ENCODE measurements at regions of chr2 and their contacts with region 1.

Region 1: DNA sequence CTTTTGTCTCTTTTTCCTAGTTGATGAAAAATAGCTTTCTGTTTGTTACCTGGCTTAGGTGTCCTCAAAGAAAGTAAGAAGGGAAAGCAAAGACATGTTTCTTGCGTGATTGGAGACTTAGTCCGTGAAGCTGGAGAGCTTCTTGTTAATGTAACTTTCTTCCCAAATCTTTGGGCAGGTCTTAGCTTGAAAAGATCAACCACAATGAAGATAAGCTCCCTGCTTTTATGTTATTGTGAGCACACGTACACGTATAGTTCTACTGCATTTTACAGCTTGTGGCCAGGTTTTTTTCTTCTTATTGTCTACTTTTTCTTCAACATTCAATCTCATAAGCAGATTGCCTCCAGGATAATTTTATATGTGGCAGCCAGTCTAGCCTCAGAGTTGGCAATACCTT is 99.8 kb downstream of the DIS3L2 start:
- DNase-seq: no peak
- ATAC-seq: no peak
- H3K4me3 ChIP-seq: no peak overlapping the region
- H3K27ac ChIP-seq: no peak overlapping the region
- H3K4me1 ChIP-seq: no peaks in the 10 kb centered on the region
- H3K27me3 ChIP-seq: no peaks in the 10 kb centered on the region
- CTCF ChIP-seq: no peak

Region 2: DNA sequence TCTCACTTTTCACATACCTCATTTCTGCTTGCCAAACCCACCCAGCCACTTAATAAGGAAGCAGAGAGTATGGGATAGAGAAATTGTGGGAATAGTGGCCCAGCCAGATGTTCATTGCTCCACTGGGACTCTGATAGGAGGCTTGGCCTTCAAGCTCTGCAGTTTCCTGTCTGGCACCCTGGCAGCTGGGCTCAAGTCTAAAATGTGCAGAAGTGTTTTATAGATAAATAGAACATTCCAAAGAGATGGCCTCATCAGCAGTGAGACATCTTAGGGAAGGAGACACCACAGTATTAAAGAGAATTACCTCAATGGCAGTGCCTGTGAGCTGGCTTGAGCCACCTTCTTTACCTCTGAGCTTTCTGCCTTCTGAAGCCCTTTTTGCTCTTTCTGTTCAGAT is 250.4 kb before region 1 on chr2:
- CTCF ChIA-PET with region 1: no interaction called
- POLR2A ChIA-PET with region 1: no interaction called
- in situ Hi-C with region 1: no loop called
- intact Hi-C with region 1: no loop called
- DNase-seq: no peak
- ATAC-seq: peak; percentile 44; the same call in 1 of the 2 replicates
- H3K4me3 ChIP-seq: no peak overlapping the region
- H3K27ac ChIP-seq: no peak overlapping the region
- H3K4me1 ChIP-seq: no peaks in the 10 kb centered on the region
- H3K27me3 ChIP-seq: no peaks in the 10 kb centered on the region
- CTCF ChIP-seq: no peak

Region 3: GRCh38 chr2:232042911-232043564 is 18.2 kb before region 1 on chr2:
- CTCF ChIA-PET with region 1: no interaction called
- POLR2A ChIA-PET with region 1: interaction called, 17 read pairs
- in situ Hi-C with region 1: no loop called
- intact Hi-C with region 1: no loop called
- DNase-seq: no peak
- ATAC-seq: no peak
- H3K4me3 ChIP-seq: no peak overlapping the region
- H3K27ac ChIP-seq: no peak overlapping the region
- H3K4me1 ChIP-seq: no peaks in the 10 kb centered on the region
- H3K27me3 ChIP-seq: no peaks in the 10 kb centered on the region
- CTCF ChIP-seq: no peak